Activated CD4-positive, alpha-beta T cell treated with anti-CD3 and anti-CD28 coated beads, Interleukin-2, amount 10 ng/mL, durations not matched to agents 7 days and 5 days (primary cell): ENCODE measurements at regions of chr5 and their contacts with region 1.

Region 1: DNA sequence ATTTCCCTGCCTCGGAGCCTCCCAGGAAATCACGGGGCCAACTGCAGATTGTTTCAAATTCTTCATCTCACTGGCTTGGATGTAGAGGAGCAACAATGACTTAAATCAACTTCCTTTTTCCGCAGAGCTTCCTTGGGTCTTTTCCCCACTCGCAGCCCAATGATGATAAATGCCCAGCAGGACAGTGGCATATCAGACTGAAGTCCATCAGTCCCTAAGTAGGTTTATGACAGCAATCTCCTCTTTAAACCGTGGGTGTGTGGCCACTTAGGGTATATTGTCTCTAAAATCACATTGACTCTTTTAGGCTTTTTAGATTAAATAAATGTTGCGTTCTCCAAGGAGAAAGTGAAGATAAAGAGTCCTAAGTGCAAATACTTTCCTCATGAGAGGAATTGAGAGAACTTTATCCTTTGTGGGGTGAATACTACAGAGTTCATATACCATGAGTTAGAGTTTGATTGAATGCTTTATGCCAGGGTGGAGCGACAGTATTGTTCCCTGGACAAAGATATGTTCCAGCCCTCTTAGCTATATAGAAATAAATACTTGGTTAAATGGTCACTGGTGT is 59.1 kb downstream of the IQGAP2 start:
- DNase-seq: no peak
- H3K4me3 Mint-ChIP-seq: no peak overlapping the region
- H3K27ac Mint-ChIP-seq: no peak overlapping the region
- H3K4me1 Mint-ChIP-seq: peaks cover 33% of the 10 kb centered on the region
- H3K27me3 Mint-ChIP-seq: no peaks in the 10 kb centered on the region

Region 2: GRCh38 chr5:76473661-76474060 is 11.5 kb after region 1 on chr5:
- CTCF ChIA-PET with region 1: interaction called, 12 read pairs
- POLR2A ChIA-PET with region 1: no interaction called
- DNase-seq: peak; percentile 82
- H3K4me3 Mint-ChIP-seq: no peak overlapping the region
- H3K27ac Mint-ChIP-seq: peak overlapping the region; percentile 90
- H3K4me1 Mint-ChIP-seq: peaks cover 69% of the 10 kb centered on the region
- H3K27me3 Mint-ChIP-seq: no peaks in the 10 kb centered on the region

Region 3: GRCh38 chr5:76513486-76513885 is 51.3 kb after region 1 on chr5:
- CTCF ChIA-PET with region 1: no interaction called
- POLR2A ChIA-PET with region 1: no interaction called
- DNase-seq: no peak
- H3K4me3 Mint-ChIP-seq: no peak overlapping the region
- H3K27ac Mint-ChIP-seq: no peak overlapping the region
- H3K4me1 Mint-ChIP-seq: peaks cover 2% of the 10 kb centered on the region
- H3K27me3 Mint-ChIP-seq: no peaks in the 10 kb centered on the region